ENCODE measurements at regions of chr6 and their contacts with region 1.

Region 1: DNA sequence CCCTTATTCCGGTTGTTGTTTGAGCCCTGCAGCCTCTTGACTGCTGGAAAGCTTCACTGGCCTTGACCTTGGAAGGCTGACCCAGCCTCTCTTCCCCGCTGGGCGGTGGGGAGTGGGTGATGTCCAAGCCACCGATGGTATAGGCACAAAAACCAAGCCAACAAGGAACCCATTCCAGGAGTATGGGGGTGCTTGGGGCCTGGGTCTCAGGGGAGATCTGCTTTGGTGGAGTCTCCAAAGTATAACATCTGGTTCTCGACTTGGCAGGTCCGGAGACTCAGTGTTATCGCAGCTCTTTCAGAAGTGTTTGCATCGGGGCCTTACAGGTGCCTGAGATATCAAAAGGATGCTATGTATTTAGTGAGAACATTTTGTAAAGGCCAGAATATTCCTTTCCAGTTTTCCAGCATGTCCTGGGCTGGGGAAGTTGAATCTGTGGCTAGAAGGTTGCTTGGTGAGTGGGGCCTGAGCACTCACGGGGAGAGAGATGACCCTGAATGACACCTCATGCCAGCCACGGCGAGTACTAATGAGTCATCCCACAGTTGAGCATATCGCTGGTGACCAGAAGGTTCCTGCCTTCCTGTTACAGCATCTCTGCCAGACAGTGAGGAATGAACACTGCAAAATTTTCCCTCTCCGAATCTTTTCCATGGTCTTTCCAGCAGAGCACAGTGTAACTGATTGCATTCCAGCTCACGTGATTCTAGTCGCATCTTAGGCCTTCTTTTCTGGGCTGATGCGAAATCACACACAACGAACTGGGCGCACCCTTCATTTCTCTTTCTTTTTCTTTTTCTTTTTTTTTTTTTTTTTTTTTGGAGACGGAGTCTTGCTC is 133.9 kb downstream of the ZDHHC14 start:
- DNase-seq: peak; percentile 75 to 92 (median 88)
- H3K4me3 ChIP-seq: no peak overlapping the region
- H3K4me3 Mint-ChIP-seq: peak overlapping the region in 1 of 2 donors; percentile 39
- H3K27ac ChIP-seq: no peak overlapping the region
- H3K27ac Mint-ChIP-seq: peak overlapping the region in 5 of 7 donors; percentile 32 to 71 (median 63)
- H3K4me1 ChIP-seq: peaks cover 18 to 31% of the 10 kb centered on the region in 2 donors
- H3K4me1 Mint-ChIP-seq: peaks cover 30% of the 10 kb centered on the region
- H3K27me3 ChIP-seq: no peaks in the 10 kb centered on the region
- H3K27me3 Mint-ChIP-seq: peaks cover 0 to 2% (median 0%) of the 10 kb centered on the region in 3 donors
- CTCF ChIP-seq: no peak

Region 2: DNA sequence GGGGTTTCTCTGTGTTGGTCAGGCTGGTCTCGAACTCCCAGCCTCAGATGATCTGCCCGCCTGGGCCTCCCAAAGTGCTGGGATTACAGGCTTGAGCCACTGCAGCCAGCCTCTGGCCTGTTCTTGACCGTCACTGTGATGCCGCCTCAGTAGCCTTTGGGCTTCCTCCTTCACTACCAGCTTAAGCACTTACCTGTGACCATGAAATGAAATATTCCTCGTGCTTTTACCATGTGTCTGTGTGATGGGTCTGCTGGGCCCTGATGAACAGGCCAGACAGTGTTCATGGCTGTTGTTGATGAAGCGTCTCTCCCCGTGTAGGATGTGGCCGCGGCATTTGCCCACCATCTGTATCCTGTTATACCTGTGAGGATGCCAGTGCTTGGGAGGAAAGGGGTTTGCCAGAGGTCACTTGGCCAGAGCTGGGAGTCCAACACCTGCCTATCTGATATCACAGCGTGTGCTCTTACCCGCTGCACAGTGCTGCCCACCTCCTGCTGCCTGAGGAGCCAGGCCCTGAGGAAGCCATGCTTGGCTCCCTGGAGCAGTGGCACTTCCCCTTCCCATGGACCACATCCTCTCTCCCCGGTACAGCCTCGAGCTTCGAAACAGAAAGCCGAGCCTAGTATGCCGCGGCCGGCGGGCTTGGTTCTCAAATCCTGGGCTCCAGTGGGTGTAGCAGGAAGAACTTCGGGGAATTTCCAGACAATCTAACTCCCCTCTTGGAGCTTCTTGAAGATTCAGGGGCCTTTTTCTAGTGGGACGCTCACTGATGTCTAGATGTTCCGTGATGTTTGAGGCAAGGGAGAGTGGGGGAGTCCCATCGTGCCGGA is 34.0 kb after region 1 on chr6:
- intact Hi-C with region 1: loop called in 1 of 2 experiments (anchors 5 kb)
- DNase-seq: peak; percentile 51 to 73 (median 60)
- H3K4me3 ChIP-seq: peak overlapping the region; percentile 14 to 58 (median 28)
- H3K4me3 Mint-ChIP-seq: peak overlapping the region; percentile 73 to 87
- H3K27ac ChIP-seq: no peak overlapping the region
- H3K27ac Mint-ChIP-seq: peak overlapping the region in 2 of 7 donors; percentile 41 to 52
- H3K4me1 ChIP-seq: peaks cover 16 to 21% of the 10 kb centered on the region in 2 donors
- H3K4me1 Mint-ChIP-seq: peaks cover 15% of the 10 kb centered on the region
- H3K27me3 ChIP-seq: no peaks in the 10 kb centered on the region
- H3K27me3 Mint-ChIP-seq: peaks cover 0 to 2% (median 0%) of the 10 kb centered on the region in 3 donors
- CTCF ChIP-seq: no peak